Right cardiac atrium (tissue), 5 donors: ENCODE measurements at regions of chr2 and their contacts with region 1.

Region 1: GRCh38 chr2:50865235-50865634 is 166.7 kb downstream of the NRXN1 start:
- DNase-seq: no peak
- ATAC-seq: no peak
- H3K4me3 ChIP-seq: no peak overlapping the region
- H3K27ac ChIP-seq: no peak overlapping the region
- H3K4me1 ChIP-seq: no peaks in the 10 kb centered on the region
- H3K27me3 ChIP-seq: no peaks in the 10 kb centered on the region

Region 2: DNA sequence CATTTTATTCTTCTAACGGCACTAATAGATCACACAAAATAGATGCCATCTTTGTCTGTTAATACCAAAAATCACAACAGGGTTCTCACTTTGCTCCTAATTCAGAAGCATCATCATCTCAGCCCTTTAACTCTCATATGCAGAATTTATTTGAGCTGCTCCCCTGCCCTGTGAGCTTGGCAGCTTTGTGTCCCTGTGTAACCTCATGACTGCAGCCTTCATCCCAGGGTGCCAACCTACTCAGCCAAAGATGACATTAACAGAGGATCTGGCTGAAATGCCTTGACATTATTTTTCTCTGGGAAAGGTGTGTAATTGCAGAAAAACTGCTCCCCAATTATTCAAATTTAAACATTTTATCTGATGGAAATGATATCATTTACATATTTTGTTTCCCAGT is 152.7 kb before region 1 on chr2:
- intact Hi-C with region 1: loop called in 1 of 4 experiments (anchors 5 kb)
- DNase-seq: no peak
- ATAC-seq: no peak
- H3K4me3 ChIP-seq: no peak overlapping the region
- H3K27ac ChIP-seq: no peak overlapping the region
- H3K4me1 ChIP-seq: no peaks in the 10 kb centered on the region
- H3K27me3 ChIP-seq: no peaks in the 10 kb centered on the region

Region 3: DNA sequence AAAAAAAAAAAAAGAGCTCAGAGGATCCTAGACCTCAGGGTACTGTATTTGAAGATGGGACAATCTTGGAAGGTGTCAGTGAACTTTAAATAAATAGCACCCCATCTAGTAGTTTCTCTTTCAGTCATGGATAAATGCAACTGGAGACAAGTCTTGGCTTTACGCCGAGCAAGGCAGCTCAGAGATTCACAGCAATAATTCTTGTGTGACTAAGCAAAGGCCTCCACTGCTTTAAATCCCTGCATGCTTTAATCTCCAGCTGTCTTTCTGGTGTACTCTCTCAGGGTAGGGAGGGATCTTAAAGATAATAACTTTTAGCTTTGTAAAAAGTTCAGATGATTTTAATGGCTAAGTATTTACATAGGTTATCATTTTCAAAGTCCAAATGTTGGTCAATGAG is 130.4 kb after region 1 on chr2:
- intact Hi-C with region 1: no loop called
- DNase-seq: peak in 1 of 3 donors; percentile 54
- ATAC-seq: no peak
- H3K4me3 ChIP-seq: no peak overlapping the region
- H3K27ac ChIP-seq: no peak overlapping the region
- H3K4me1 ChIP-seq: no peaks in the 10 kb centered on the region
- H3K27me3 ChIP-seq: no peaks in the 10 kb centered on the region